MCF 10A (cell line): ENCODE measurements at regions of chr5 and their contacts with region 1.

Region 1: DNA sequence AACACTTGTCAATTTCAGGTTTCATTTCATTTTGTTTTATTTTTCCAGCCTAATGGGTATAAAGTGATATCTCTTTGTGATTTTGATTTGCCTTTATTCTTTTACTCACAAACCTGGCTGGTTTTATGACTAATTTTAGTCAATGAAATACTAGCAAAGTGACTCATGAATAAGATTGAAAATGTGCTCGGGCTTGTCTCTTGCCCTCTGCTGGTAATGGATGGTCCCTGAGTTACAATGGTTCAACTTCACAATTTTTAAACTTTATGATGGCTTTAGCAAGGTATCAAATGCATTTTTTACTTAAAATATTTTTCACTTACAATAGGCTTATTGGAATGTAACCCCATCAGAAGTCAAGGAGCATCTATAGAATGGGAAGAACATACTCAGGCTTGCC is 431.4 kb upstream of the CCNG1 start:
- DNase-seq: peak; percentile 63
- H3K4me3 Mint-ChIP-seq: no peak overlapping the region
- H3K27ac Mint-ChIP-seq: no peak overlapping the region
- H3K4me1 Mint-ChIP-seq: peaks cover 14% of the 10 kb centered on the region
- H3K27me3 Mint-ChIP-seq: no peaks in the 10 kb centered on the region
- CTCF ChIP-seq: peak; percentile 64

Region 2: DNA sequence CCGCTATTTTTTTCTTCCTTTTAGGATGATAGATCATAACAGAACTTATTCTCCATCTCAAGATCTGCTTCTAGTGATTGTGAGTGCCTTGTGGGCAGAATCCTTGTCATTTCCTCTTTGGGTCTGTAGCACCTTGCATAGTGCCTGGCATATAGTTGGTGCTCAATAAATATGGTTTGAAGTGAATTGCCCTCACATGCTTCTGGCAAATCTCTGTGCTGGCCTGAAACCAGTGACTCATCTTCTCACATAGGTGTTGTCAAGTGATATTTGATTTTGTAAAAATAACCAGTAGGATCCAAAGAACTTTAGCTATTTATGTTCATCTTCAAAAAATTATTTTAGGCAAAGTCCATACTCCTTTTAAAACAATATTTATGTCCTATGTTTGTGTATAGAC is 851.7 kb before region 1 on chr5:
- CTCF ChIA-PET with region 1: no interaction called
- POLR2A ChIA-PET with region 1: no interaction called
- intact Hi-C with region 1: no loop called
- DNase-seq: no peak
- H3K4me3 Mint-ChIP-seq: no peak overlapping the region
- H3K27ac Mint-ChIP-seq: no peak overlapping the region
- H3K4me1 Mint-ChIP-seq: no peaks in the 10 kb centered on the region
- H3K27me3 Mint-ChIP-seq: no peaks in the 10 kb centered on the region
- CTCF ChIP-seq: no peak

Region 3: GRCh38 chr5:162485666-162486292 is 520.2 kb before region 1 on chr5:
- CTCF ChIA-PET with region 1: no interaction called
- POLR2A ChIA-PET with region 1: no interaction called
- intact Hi-C with region 1: no loop called
- DNase-seq: no peak
- H3K4me3 Mint-ChIP-seq: no peak overlapping the region
- H3K27ac Mint-ChIP-seq: no peak overlapping the region
- H3K4me1 Mint-ChIP-seq: peaks cover 21% of the 10 kb centered on the region
- H3K27me3 Mint-ChIP-seq: no peaks in the 10 kb centered on the region
- CTCF ChIP-seq: no peak

Region 4: GRCh38 chr5:162990856-162991497 is 15.0 kb before region 1 on chr5:
- CTCF ChIA-PET with region 1: interaction called, 14 read pairs
- POLR2A ChIA-PET with region 1: no interaction called
- intact Hi-C with region 1: no loop called
- DNase-seq: no peak
- H3K4me3 Mint-ChIP-seq: no peak overlapping the region
- H3K27ac Mint-ChIP-seq: no peak overlapping the region
- H3K4me1 Mint-ChIP-seq: no peaks in the 10 kb centered on the region
- H3K27me3 Mint-ChIP-seq: no peaks in the 10 kb centered on the region
- CTCF ChIP-seq: no peak

Region 5: DNA sequence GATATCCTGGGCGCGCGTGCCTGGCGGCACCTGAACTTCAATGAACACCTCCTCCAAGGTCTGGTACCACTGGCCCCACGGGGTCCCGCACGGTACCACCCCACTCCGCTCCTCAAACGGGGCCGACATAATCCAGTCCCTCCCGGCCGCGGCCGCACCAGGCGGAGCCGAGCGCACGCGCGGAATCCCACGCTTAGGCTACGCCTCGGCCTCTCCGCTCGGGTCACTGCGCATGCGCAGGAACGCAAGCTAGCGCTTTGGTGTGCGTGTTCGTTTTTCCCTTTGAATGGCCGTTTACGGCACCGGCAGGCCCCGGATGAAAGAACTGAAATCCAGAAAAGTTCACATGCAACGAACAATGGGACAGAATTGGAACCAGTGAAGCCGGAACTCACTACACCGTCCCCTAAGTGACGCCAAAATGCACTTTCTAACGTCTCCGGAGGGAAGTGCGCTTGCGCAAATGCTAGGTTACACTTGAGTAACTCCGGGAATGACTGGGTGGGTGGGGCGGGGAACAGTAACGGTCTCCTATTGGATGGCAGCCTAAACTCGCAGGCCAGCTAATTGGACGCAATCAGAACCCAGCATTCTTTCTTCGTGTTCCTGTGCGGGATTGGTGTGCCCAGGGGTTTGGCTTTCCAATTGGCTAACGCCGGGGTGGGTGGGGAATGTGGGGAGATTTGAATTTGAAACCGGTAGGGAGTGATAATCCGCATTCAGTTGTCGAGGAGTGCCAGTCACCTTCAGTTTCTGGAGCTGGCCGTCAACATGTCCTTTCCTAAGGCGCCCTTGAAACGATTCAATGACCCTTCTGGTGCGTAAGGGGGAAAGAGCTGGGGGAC is 454.2 kb after region 1 on chr5 and contains the starts of genes HMMR and NUDCD2:
- CTCF ChIA-PET with region 1: no interaction called
- POLR2A ChIA-PET with region 1: no interaction called
- intact Hi-C with region 1: no loop called
- DNase-seq: peak; percentile 100
- H3K4me3 Mint-ChIP-seq: peak within 1 kb of the TSS; percentile 83
- H3K27ac Mint-ChIP-seq: peak within 1 kb of the TSS; percentile 99
- H3K4me1 Mint-ChIP-seq: peaks cover 48% of the 10 kb centered on the region
- H3K27me3 Mint-ChIP-seq: no peaks in the 10 kb centered on the region
- CTCF ChIP-seq: peak; percentile 13
- total RNA-seq, gene HMMR: 29.3 and 43.5 TPM in 2 replicates
- total RNA-seq, gene NUDCD2: 57.8 and 68.0 TPM in 2 replicates